ENCODE measurements at regions of chr4 and their contacts with region 1.

Region 1: GRCh38 chr4:73258686-73259570 is at the start of gene ANKRD17:
- DNase-seq: peak; percentile 95
- ATAC-seq: peak; percentile 76
- H3K4me3 Mint-ChIP-seq: peak within 1 kb of the TSS; percentile 99
- H3K27ac Mint-ChIP-seq: peak within 1 kb of the TSS; percentile 97
- H3K4me1 Mint-ChIP-seq: peaks cover 44% of the 10 kb centered on the region
- H3K27me3 Mint-ChIP-seq: no peaks in the 10 kb centered on the region
- total RNA-seq, gene ANKRD17: 58.4 to 63.7 TPM

Region 2: GRCh38 chr4:72701987-72702819 is 556.7 kb before region 1 on chr4:
- CTCF ChIA-PET with region 1: no interaction called
- POLR2A ChIA-PET with region 1: no interaction called
- intact Hi-C with region 1: loop called in 1 of 2 experiments (anchors 5 kb)
- DNase-seq: peak; percentile 44
- ATAC-seq: peak; percentile 68
- H3K4me3 Mint-ChIP-seq: peak overlapping the region; percentile 69
- H3K27ac Mint-ChIP-seq: no peak overlapping the region
- H3K4me1 Mint-ChIP-seq: no peaks in the 10 kb centered on the region
- H3K27me3 Mint-ChIP-seq: peaks cover 4% of the 10 kb centered on the region

Region 3: DNA sequence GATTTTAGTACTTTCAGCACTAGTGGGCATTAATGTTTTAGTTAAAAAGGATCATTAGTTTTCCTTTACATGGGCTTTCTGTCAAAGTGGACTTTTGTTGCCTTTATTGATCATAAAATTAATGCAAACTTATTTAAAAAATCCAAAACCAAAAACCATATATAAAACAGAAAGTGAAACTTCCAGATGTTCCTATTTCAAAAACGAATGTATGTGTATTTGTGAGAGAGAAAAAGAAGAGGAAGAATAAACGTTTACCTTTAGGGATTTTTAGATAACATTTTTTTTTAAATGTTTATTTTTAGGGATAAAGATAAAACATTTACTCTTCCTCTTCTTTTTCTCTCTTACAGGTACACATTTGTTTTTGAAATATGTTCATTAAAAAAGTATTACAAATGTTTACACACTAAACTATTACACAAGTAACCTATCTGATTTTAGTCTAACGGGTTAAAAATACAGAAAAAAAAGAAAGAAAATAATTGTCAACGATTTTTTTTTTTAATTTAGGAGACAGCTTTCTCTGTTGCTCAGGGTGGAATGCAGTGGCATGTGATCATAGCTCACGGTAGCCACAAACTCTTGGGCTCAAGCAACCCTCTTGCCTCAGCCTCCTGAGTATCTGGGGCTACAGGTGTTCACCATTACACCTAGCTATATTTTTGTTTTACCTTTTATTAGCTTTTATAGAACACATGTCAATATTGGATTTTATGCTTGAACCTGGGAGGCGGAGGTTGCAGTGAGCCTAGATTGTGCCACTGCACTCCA is 172.6 kb before region 1 on chr4:
- CTCF ChIA-PET with region 1: interaction called, 5 read pairs
- POLR2A ChIA-PET with region 1: no interaction called
- intact Hi-C with region 1: loop called in 1 of 2 experiments (anchors 5 kb)
- DNase-seq: no peak
- ATAC-seq: peak; percentile 60
- H3K4me3 Mint-ChIP-seq: peak overlapping the region; percentile 19
- H3K27ac Mint-ChIP-seq: peak overlapping the region; percentile 58
- H3K4me1 Mint-ChIP-seq: peaks cover 19% of the 10 kb centered on the region
- H3K27me3 Mint-ChIP-seq: no peaks in the 10 kb centered on the region

Region 4: DNA sequence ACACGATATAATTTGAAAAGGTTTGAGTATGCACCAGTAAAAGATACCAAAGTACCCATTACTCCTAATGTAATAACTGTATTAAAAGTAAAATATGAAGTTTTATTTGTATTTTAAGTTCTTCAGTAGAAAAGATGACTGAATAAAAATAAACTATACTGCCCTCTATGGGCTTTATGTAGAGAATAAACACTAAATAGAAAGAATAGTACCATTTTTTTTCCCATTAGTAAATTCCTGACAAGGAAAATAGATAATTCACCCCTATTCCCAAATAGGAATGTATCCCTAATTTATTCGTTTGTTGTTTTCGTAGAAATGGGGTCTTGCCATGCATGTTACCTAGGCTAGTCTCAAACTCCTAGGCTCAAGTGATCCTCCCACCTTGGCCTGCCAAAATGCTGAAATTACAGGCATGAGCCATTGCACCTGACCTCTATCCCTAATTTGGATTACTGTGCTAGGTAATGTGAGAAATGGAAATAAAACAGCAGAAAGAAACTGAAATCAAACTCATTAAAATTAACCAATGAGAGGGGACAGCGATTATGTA is 115.9 kb before region 1 on chr4:
- CTCF ChIA-PET with region 1: interaction called, 5 read pairs
- POLR2A ChIA-PET with region 1: no interaction called
- intact Hi-C with region 1: loop called in 1 of 2 experiments (anchors 5 kb)
- DNase-seq: no peak
- ATAC-seq: no peak
- H3K4me3 Mint-ChIP-seq: no peak overlapping the region
- H3K27ac Mint-ChIP-seq: peak overlapping the region; percentile 7
- H3K4me1 Mint-ChIP-seq: peaks cover 8% of the 10 kb centered on the region
- H3K27me3 Mint-ChIP-seq: no peaks in the 10 kb centered on the region

Region 5: DNA sequence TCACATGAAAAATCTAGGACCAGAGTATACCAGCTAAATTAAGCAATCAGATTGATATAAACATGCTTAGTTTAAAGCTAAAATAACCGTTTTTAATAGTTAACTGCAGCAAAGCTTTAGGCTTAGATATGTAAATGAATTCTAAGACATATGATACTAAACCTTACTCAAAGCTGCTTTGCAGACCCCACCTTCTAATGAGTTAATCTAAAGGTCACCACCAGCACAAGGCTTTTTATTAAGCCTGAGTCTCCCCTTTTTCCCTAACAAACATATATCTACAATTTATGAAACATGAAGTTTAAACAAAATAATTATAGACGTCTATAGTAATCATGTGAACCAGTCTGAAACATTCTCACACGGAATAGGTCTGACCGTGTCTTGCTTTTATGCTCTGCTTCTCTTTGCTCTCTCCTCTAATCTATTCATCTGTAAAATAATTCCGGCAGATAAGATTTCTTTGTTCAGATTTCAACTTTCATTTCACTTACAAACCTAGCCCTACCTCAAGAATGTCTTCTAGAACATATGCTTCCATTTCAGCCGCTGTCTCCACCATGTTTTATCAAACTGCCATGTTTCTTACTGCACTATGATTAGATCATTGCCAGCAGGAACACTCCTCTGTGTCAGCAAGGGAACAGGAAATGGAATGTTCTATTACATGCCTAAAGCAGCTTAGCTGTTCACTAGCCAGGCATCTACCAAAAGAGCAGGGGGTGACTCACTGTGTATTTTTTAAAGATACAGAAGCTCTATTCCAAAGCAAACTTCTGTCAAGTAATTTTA is 36.3 kb before region 1 on chr4:
- CTCF ChIA-PET with region 1: interaction called, 4 read pairs
- POLR2A ChIA-PET with region 1: no interaction called
- intact Hi-C with region 1: loop called (anchors 1 to 2 kb)
- DNase-seq: peak; percentile 65
- ATAC-seq: peak; percentile 100
- H3K4me3 Mint-ChIP-seq: no peak overlapping the region
- H3K27ac Mint-ChIP-seq: no peak overlapping the region
- H3K4me1 Mint-ChIP-seq: peaks cover 27% of the 10 kb centered on the region
- H3K27me3 Mint-ChIP-seq: no peaks in the 10 kb centered on the region

Region 6: DNA sequence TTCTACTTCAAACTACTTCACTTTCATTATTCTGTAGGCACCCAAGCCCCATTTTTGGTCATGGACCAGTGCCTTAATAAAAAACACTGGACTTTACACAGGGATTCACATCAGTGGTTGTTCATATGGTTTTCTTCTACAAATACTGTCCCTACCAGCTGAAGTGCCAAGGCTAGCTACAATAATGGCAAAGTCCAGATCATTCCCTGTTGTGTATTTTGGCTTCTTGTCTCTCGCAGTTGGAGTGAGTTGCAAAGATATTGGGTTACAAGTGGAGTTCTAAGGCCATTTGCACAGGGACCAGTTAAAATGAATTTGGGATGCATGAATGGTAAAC is 16.4 kb after region 1 on chr4:
- CTCF ChIA-PET with region 1: no interaction called
- POLR2A ChIA-PET with region 1: no interaction called
- intact Hi-C with region 1: no loop called
- DNase-seq: no peak
- ATAC-seq: no peak
- H3K4me3 Mint-ChIP-seq: no peak overlapping the region
- H3K27ac Mint-ChIP-seq: no peak overlapping the region
- H3K4me1 Mint-ChIP-seq: peaks cover 6% of the 10 kb centered on the region
- H3K27me3 Mint-ChIP-seq: no peaks in the 10 kb centered on the region

Region 7: DNA sequence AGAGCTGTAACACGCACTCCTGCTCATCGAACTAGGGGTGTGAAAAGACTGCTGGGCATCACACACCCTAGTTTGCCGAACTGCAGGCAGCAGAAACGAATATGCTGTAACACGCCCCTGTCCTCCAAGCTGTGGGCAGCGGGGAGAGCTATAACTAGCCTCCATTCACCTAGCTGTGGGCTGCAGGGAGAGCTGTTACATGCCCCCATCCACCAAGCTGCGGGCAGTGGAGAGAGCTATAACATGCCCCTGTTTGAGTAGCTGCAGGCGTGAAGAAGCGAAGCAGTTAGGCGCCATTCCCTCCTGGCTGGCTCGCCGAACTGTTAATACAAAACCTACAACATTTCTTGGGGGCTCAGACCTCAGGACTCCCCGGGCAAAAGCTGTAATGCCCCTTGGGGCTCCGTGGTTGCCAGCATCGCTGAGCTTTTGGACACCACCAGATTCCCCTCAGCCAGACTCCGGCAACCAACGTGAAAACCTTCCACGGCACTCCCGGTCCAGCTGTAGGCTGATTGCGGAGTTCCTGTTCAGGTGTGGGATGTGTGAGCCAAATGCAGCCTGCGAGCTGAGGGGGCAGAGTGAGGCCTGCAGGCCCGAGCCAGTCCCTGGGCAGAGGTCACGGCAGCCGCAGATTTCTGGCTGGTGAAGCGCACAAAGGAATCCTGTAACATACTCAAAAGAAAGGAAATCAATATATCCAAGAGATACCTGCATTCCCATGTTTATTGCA is 40.8 kb after region 1 on chr4:
- CTCF ChIA-PET with region 1: no interaction called
- POLR2A ChIA-PET with region 1: no interaction called
- intact Hi-C with region 1: no loop called
- DNase-seq: no peak
- ATAC-seq: no peak
- H3K4me3 Mint-ChIP-seq: no peak overlapping the region
- H3K27ac Mint-ChIP-seq: no peak overlapping the region
- H3K4me1 Mint-ChIP-seq: no peaks in the 10 kb centered on the region
- H3K27me3 Mint-ChIP-seq: no peaks in the 10 kb centered on the region

Region 8: DNA sequence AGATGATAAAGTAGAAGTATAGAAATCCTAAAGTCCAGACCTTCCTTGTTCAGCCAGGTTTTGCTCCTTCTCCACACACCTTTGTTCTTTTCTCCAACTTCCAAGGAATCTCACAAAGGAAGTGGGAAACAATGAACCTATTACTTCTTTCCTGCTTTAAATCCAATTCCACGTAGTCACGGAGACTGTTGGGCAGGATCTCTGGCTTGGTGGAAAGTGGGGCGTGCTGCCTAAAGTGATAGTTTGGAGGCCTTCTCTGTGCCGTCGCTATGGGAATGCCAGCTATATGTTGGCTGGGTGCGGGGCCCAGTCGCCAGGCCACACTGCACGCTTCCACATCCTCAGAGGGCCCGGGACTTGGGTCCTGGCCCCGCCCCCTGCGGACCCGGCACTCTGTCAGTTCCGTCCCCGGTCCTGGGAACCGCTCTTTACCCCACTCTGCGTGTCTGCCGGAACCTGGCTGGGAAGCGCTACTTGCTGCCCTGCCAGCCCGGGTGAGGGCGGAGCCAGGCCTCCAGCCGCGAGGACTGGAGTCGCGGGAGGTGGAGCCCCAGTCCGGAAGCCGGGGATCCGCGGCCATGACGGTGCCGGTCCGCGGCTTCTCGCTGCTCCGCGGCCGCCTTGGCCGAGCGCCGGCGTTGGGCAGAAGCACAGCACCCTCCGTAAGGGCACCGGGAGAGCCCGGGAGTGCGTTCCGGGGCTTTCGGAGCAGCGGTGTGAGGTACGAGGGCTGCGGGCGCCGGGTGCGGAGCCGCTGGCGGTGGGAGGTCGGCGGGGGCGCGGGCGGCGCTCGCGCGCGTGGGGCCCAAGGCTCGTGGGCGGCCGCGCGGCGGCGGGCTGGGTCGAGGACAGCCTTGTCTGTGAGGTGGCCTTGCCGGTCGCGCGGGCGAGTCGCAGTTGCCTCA is 898.9 kb after region 1 on chr4 and contains the start of gene MTHFD2L:
- CTCF ChIA-PET with region 1: no interaction called
- POLR2A ChIA-PET with region 1: no interaction called
- intact Hi-C with region 1: loop called in 1 of 2 experiments (anchors 2 kb)
- DNase-seq: peak; percentile 92
- ATAC-seq: peak; percentile 99
- H3K4me3 Mint-ChIP-seq: peak within 1 kb of the TSS; percentile 91
- H3K27ac Mint-ChIP-seq: peak within 1 kb of the TSS; percentile 93
- H3K4me1 Mint-ChIP-seq: peaks cover 19% of the 10 kb centered on the region
- H3K27me3 Mint-ChIP-seq: peaks cover 3% of the 10 kb centered on the region
- total RNA-seq, gene MTHFD2L: 6.4 to 6.9 TPM

Measured in activated CD4-positive, alpha-beta T cell treated with anti-CD3 and anti-CD28 coated beads for 36 hours (primary cell).